ENCODE measurements at regions of chr1 and their contacts with region 1.

Region 1: DNA sequence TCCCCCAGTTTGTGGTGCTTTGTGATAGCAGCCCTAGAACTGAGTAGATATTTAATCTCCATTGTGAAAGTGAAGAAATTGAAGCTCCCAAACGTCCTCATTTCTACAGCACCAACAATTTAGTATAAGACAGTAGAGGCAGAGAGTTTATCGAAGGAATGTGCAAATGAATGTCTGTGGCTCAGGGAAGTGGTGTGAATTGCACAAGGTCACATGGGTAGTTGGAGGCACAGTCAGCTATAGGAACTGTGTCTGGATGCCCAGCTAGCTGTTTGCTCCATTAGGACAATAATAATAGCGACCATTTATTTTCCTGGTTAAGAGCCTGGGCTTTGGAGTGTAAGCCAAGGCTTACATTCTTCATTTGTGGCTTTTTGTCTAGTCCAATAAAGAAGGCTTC is 144.4 kb upstream of the USP24 start:
- DNase-seq: no peak
- ATAC-seq: no peak
- H3K4me3 ChIP-seq: no peak overlapping the region
- H3K27ac ChIP-seq: no peak overlapping the region
- H3K4me1 ChIP-seq: no peaks in the 10 kb centered on the region
- CTCF ChIP-seq: no peak
- EP300 ChIP-seq: no peak
- POLR2A ChIP-seq: no peak
- RAD21 ChIP-seq: no peak

Region 2: GRCh38 chr1:55071477-55071876 is 288.1 kb before region 1 on chr1:
- CTCF ChIA-PET with region 1: no interaction called
- POLR2A ChIA-PET with region 1: no interaction called
- DNase-seq: peak; percentile 44 to 47
- ATAC-seq: peak; percentile 94 to 96
- H3K4me3 ChIP-seq: no peak overlapping the region
- H3K27ac ChIP-seq: no peak overlapping the region
- H3K4me1 ChIP-seq: no peaks in the 10 kb centered on the region
- CTCF ChIP-seq: peak; percentile 40; the same call in 2 of the 3 replicates
- EP300 ChIP-seq: no peak
- POLR2A ChIP-seq: no peak
- RAD21 ChIP-seq: peak; percentile 31 to 38; a peak in 3 of 5 replicates

Region 3: DNA sequence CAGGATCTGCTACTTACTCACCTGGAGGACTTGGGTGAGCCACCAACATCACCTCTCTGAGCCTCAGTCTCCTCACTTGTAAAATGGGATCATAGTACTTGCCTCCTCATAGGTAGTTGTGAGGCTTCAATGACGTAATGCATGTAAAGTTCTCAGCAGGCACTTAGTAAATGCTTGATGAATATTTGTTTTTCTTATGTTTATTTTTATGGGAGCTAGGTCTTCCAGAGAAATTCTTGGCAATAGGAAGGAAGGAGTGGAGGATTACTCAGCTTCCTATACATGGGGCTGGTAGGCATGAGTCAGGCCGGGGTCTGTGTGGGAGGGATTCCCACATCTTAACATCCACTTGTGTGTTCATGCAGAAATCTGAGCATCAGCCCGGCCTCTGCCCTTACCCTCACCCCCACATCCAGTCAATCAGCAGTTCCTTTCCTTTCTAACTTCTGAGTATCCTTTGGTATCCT is 49.1 kb before region 1 on chr1:
- CTCF ChIA-PET with region 1: no interaction called
- POLR2A ChIA-PET with region 1: no interaction called
- DNase-seq: peak; percentile 80 to 94
- ATAC-seq: peak; percentile 97 to 98
- H3K4me3 ChIP-seq: no peak overlapping the region
- H3K27ac ChIP-seq: peak overlapping the region; percentile 89 to 90
- H3K4me1 ChIP-seq: peaks cover 49% of the 10 kb centered on the region
- CTCF ChIP-seq: no peak
- EP300 ChIP-seq: peak; percentile 86 to 92; a peak in 4 of 5 replicates
- POLR2A ChIP-seq: no peak
- RAD21 ChIP-seq: peak; percentile 17 to 54; a peak in 4 of 5 replicates

Region 4: GRCh38 chr1:55375617-55376258 is 16.1 kb after region 1 on chr1:
- CTCF ChIA-PET with region 1: interaction called, 19 read pairs
- POLR2A ChIA-PET with region 1: no interaction called
- DNase-seq: peak; percentile 9 to 49
- ATAC-seq: peak in 1 of 2 experiments; percentile 67; a peak in 3 of 6 replicates
- H3K4me3 ChIP-seq: no peak overlapping the region
- H3K27ac ChIP-seq: peak overlapping the region; percentile 38 to 81; a peak in 4 of 6 replicates
- H3K4me1 ChIP-seq: no peaks in the 10 kb centered on the region
- CTCF ChIP-seq: peak; percentile 42
- EP300 ChIP-seq: no peak
- POLR2A ChIP-seq: no peak
- RAD21 ChIP-seq: peak; percentile 33 to 49; a peak in 3 of 5 replicates

Region 5: GRCh38 chr1:55463814-55464475 is 104.3 kb after region 1 on chr1:
- CTCF ChIA-PET with region 1: no interaction called
- POLR2A ChIA-PET with region 1: no interaction called
- DNase-seq: no peak
- ATAC-seq: no peak
- H3K4me3 ChIP-seq: no peak overlapping the region
- H3K27ac ChIP-seq: peak overlapping the region in 1 of 2 experiments; percentile 52; a peak in 3 of 6 replicates
- H3K4me1 ChIP-seq: no peaks in the 10 kb centered on the region
- CTCF ChIP-seq: no peak
- EP300 ChIP-seq: no peak
- POLR2A ChIP-seq: no peak
- RAD21 ChIP-seq: no peak

Region 6: DNA sequence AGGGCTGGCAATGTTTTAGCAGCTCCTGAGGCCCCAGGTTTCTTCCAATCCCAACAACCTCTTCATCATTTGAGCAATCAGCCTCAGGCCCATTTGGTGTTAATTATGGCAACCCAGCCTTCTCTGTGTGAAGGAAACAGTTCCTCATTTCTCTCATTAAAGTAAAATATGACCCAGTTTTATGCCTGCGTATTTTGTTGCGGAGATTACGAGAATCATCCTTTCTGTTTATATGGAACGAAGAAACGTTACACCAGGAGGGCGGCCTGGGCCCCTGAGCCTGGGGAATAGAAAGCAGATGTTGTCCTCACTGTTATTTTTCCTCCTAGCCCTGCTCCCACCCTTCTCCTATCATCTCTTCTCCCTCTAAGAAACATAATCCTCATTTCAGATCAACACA is 187.8 kb after region 1 on chr1:
- CTCF ChIA-PET with region 1: no interaction called
- POLR2A ChIA-PET with region 1: no interaction called
- DNase-seq: no peak
- ATAC-seq: no peak
- H3K4me3 ChIP-seq: no peak overlapping the region
- H3K27ac ChIP-seq: 0 out of 6 replicates have a peak overlapping the region, but pooled peaks of 1 of the 2 experiments have one; percentile 16
- H3K4me1 ChIP-seq: no peaks in the 10 kb centered on the region
- CTCF ChIP-seq: no peak
- EP300 ChIP-seq: no peak
- POLR2A ChIP-seq: no peak
- RAD21 ChIP-seq: no peak